GM12878 (cell line): ENCODE measurements at regions of chr9 and their contacts with region 1.

Region 1: GRCh38 chr9:131747356-131747755 is 7.5 kb upstream of the RAPGEF1 start:
- DNase-seq: no peak
- ATAC-seq: peak; percentile 81
- H3K4me3 ChIP-seq: no peak overlapping the region
- H3K27ac ChIP-seq: no peak overlapping the region
- H3K4me1 ChIP-seq: peaks cover 15% of the 10 kb centered on the region
- H3K27me3 ChIP-seq: no peaks in the 10 kb centered on the region
- CTCF ChIP-seq: peak; percentile 66 to 77 (median 67)
- EP300 ChIP-seq: no peak
- POLR2A ChIP-seq: no peak
- RAD21 ChIP-seq: peak; percentile 85

Region 2: DNA sequence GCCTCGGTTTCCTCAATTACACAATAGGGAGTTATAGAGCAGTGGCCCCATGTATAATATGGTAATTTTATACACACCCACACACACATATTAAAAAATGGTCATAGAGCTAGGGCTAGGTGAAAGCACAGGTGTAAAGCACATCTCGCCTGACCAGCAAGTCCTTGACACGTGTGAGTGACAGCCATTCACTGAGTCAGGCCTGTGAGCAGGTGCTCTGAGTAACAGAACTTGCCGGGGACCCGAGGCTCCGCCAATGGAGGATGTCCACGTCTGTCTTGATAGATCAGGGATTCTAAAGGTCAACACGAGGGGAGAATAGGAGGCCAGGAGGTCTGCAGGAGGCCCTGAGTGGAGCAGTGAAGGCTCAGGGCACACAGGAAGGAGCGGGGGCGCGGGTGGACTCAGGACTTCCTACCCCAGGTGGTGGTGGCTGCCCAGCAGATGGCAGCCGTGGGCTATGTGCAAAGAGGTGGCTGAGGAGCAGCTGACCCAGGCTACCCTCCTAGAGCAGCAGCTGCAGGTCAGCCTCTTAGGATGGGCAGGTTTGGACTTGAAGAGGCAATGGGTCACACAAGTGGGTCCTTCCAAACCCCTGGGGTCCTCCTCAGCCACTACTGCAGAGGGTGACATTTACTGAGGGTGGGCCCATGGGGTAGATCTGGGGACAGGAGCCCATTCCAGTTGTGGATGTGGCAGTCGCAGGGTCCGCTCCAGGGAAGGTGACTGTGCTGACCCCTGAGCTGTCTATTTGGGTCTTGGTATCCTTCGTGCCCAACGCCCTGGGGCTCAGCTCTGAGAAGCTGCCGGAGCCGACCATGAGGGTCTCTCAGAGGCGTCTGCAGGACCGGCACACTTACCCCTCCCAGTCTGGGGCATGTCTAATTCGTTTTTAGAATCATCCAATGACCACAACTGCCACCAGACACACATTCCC is 156.2 kb before region 1 on chr9:
- CTCF ChIA-PET with region 1: interaction called, 55 read pairs
- POLR2A ChIA-PET with region 1: interaction called, 3 read pairs
- RAD21 ChIA-PET with region 1: interaction called, 8 read pairs
- SMC1A ChIA-PET with region 1: interaction called, 22 read pairs
- in situ Hi-C with region 1: loop called (anchors 5 kb)
- intact Hi-C with region 1: no loop called
- DNase-seq: peak; percentile 21
- ATAC-seq: peak; percentile 98
- H3K4me3 ChIP-seq: no peak overlapping the region
- H3K27ac ChIP-seq: no peak overlapping the region
- H3K4me1 ChIP-seq: no peaks in the 10 kb centered on the region
- H3K27me3 ChIP-seq: no peaks in the 10 kb centered on the region
- CTCF ChIP-seq: peak; percentile 73 to 97 (median 86)
- EP300 ChIP-seq: no peak
- POLR2A ChIP-seq: 0 out of 2 replicates have a peak, but pooled peaks have one; percentile 53
- RAD21 ChIP-seq: peak; percentile 78